AG04449 (cell line): ENCODE measurements at regions of chr20 and their contacts with region 1.

Region 1: DNA sequence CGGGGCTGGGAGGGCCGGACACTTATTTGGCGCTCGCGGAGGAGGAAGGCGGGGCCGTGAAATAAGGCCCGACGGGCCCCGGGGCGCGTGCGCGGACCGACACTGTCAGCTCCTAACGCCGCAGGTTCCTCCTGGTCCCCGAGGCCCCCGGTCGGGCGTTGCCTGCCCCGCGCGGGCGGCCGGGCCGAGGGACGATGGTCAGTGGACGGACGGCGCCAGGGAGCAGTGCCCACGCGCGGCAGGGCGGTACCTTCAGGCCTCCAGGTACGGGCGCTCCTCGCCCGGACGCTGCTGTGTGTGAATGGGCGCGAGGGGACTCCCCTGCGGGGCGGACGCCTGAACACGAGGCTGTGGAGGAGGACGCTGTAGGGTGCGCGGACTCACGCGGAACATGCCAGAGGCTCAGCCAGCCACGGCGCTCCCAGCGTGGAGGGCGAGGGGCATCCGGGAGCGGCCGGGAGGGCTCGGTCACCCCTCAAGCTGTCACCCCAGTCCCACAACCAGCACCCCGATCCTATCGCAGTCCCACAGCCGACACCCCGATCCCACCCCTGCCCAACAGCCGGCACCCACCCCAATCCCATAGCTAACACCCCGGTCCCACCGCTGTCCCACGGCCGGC is 339 bp upstream of the GMEB2 start:
- DNase-seq: peak; percentile 34
- H3K4me3 ChIP-seq: peak overlapping the region; percentile 93
- CTCF ChIP-seq: no peak

Region 2: GRCh38 chr20:63641792-63642544 is 14.7 kb after region 1 on chr20:
- CTCF ChIA-PET with region 1: interaction called, 6 read pairs
- POLR2A ChIA-PET with region 1: interaction called, 11 read pairs
- DNase-seq: no peak
- H3K4me3 ChIP-seq: peak overlapping the region; percentile 57
- CTCF ChIP-seq: peak; percentile 27

Region 3: DNA sequence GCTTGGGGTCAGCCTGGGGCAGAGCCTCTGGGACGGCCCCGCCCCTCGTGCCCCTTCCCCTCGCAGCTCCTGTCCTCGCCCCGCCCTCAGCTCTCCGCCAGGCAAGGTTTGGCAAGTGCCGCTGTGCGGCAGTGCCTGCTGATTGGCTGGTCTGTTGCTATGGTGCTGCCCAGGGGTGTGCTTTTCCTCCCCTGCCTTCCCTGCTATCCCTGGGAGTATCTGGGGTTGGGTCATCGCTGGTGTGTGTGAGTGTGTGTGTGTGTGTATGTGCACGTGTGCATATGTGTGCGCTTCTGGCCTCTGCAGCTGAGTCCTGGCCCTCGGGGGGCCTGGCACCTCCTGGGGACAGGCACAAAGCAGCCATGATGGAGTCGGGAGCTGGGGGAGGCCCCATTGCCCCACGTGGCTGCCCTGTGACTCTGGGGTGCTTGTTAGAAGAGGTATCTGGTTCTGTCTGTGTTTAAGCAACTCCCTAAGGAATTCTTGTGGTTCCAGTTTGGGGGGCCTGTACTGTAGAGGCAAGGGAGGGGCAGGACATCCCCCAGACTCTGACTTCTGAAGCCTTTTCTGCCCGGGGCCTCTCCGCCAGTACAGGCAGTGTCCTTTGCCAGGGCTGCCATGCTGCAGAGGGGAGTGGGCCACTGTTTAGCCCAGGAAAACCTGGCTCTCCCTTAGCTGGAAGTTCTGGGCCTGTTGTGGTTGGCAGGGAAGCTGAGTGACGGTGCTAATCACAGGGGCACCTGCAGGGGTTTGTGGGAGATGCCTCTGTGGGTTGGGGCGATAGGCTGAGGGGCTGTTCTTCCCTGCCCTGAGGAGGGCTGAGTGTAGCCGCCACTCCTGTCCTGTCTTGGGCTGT is 37.8 kb after region 1 on chr20:
- CTCF ChIA-PET with region 1: no interaction called
- POLR2A ChIA-PET with region 1: no interaction called
- DNase-seq: no peak
- H3K4me3 ChIP-seq: no peak overlapping the region
- CTCF ChIP-seq: no peak

Region 4: DNA sequence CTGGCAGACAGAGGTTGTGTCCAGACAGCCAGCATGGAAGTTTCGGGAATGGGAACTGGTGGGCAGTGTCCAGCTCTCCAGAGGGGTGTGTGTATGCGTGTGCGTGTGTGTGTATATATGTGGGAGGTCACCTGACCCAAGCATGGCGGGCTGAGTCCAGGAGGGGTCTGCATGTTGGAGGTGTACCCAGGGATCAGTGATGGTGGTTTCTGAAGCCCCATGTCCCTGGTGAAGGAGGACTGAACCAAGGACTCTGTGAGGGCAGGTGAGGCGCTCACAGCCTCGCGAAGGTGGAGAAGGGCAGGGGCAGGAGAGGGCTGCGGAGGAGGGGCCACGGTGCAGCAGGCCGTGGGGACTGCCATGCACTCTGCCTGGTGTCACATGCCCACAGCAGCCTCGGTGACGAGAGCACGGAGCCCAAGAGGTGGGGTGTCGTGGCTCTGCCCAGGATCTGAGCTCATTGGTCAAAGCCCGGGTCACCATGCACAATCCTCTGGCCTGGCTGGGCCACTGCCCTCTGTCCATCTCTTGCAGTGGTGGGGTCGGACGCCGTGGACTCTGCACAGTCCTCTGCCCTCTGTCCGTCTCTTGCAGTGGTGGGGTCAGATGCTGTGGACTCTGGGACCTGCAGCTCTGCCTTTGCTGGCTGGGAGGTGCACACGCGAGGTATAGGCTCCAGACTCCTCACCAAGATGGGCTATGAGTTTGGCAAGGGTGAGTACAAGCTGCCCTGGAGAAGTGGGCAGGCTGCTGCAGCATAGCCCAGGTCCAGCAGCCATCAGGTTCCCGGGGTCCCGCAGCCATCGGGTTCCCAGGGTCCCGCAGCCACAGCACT is 107.1 kb after region 1 on chr20:
- CTCF ChIA-PET with region 1: no interaction called
- POLR2A ChIA-PET with region 1: no interaction called
- DNase-seq: no peak
- H3K4me3 ChIP-seq: no peak overlapping the region
- CTCF ChIP-seq: no peak